GM12878 (cell line): ENCODE measurements at regions of chr7 and their contacts with region 1.

Region 1: GRCh38 chr7:135170274-135170997 is at the start of gene CYREN:
- DNase-seq: no peak
- ATAC-seq: peak; percentile 78
- H3K4me3 ChIP-seq: peak within 1 kb of the TSS; percentile 84
- H3K27ac ChIP-seq: peak within 1 kb of the TSS; percentile 96
- H3K4me1 ChIP-seq: peaks cover 24% of the 10 kb centered on the region
- H3K27me3 ChIP-seq: no peaks in the 10 kb centered on the region
- CTCF ChIP-seq: peak; percentile 69 to 88 (median 70)
- EP300 ChIP-seq: no peak; a peak in 1 of 4 replicates
- POLR2A ChIP-seq: peak; percentile 88; the same call in 1 of the 2 replicates
- RAD21 ChIP-seq: peak; percentile 74
- polyA plus RNA-seq, gene CYREN: 8.7 to 12.9 TPM

Region 2: DNA sequence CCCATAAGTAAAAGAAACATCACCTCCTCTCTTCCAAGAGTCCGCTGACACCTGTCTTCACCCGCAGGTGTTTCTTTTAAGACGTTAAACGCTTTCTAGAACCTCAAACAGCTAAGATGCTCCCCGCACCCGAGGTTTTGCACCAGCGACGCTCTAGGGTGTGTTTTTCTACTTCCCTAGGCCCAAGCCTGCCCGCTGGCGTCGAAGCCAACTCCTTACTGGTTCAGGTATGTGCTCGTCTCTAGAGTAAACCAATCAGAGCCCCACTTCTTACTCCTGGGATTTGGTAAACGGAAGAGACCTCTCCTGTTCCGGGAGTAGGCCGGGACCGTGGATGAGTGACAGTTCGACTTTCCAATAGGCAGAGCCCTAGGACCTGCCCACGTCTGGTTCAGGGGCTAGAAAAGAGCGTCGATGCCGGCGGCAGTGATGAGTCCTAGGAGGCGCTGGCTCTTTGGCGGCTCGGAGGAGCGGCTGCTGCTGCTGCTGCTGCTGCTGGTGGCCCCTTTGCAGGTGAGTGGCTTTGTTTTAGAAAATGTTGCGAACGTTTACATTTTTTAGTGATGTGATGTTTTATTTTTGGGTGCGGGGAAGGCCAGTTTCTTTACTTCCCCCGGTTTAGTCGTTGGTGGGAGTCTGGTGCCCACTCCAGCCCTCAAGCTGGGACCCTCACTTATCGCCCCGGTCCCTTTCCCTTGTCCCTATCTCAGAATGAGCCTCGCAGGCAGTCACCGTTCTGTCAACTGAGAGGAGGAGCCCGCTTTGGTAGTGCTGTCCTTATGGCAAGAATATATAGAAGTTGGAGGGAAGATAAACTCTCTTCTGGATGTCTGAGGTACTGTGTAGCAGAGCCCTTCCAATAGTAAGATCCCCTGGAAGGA is 523.8 kb before region 1 on chr7 and contains the start of gene BPGM:
- CTCF ChIA-PET with region 1: interaction called, 5 read pairs
- POLR2A ChIA-PET with region 1: interaction called, 9 read pairs
- RAD21 ChIA-PET with region 1: interaction called, 3 read pairs
- SMC1A ChIA-PET with region 1: interaction called, 4 read pairs
- in situ Hi-C with region 1: loop called (anchors 10 kb)
- intact Hi-C with region 1: loop called (anchors 5 kb)
- DNase-seq: peak; percentile 100
- ATAC-seq: peak; percentile 98
- H3K4me3 ChIP-seq: peak within 1 kb of the TSS; percentile 85
- H3K27ac ChIP-seq: peak within 1 kb of the TSS; percentile 75
- H3K4me1 ChIP-seq: 0 out of 2 replicates have a peak, but pooled peaks cover 3% of the 10 kb centered on the region
- H3K27me3 ChIP-seq: no peaks in the 10 kb centered on the region
- CTCF ChIP-seq: peak; percentile 37 to 48 (median 47)
- EP300 ChIP-seq: peak in 1 of 2 experiments; percentile 50; a peak in 1 of 4 replicates
- POLR2A ChIP-seq: peak; percentile 99
- RAD21 ChIP-seq: no peak
- polyA plus RNA-seq, gene BPGM: 18.4 to 20.1 TPM

Region 3: GRCh38 chr7:134986363-134987251 is 183.8 kb before region 1 on chr7 and contains the start of gene AGBL3:
- CTCF ChIA-PET with region 1: interaction called, 157 read pairs
- POLR2A ChIA-PET with region 1: interaction called, 41 read pairs
- RAD21 ChIA-PET with region 1: interaction called, 120 read pairs
- SMC1A ChIA-PET with region 1: interaction called, 97 read pairs
- in situ Hi-C with region 1: loop called (anchors 5 kb)
- intact Hi-C with region 1: loop called (anchors 2 kb)
- DNase-seq: peak; percentile 84
- ATAC-seq: peak; percentile 85
- H3K4me3 ChIP-seq: peak within 1 kb of the TSS; percentile 85
- H3K27ac ChIP-seq: peak within 1 kb of the TSS; percentile 97
- H3K4me1 ChIP-seq: peaks cover 11% of the 10 kb centered on the region
- H3K27me3 ChIP-seq: no peaks in the 10 kb centered on the region
- CTCF ChIP-seq: peak; percentile 59 to 75 (median 73)
- EP300 ChIP-seq: peak in 1 of 2 experiments; percentile 41; a peak in 1 of 4 replicates
- POLR2A ChIP-seq: peak; percentile 88
- RAD21 ChIP-seq: no peak
- polyA plus RNA-seq, gene AGBL3: 0.82 to 1.4 TPM

Region 4: GRCh38 chr7:135147899-135148721 is 22.3 kb before region 1 on chr7 and contains the start of gene TMEM140:
- CTCF ChIA-PET with region 1: interaction called, 86 read pairs
- POLR2A ChIA-PET with region 1: interaction called, 169 read pairs
- RAD21 ChIA-PET with region 1: interaction called, 84 read pairs
- SMC1A ChIA-PET with region 1: interaction called, 158 read pairs
- in situ Hi-C with region 1: no loop called
- intact Hi-C with region 1: loop called (anchors 1 kb)
- DNase-seq: peak; percentile 90
- ATAC-seq: peak; percentile 78
- H3K4me3 ChIP-seq: peak within 1 kb of the TSS; percentile 67
- H3K27ac ChIP-seq: peak within 1 kb of the TSS; percentile 73
- H3K4me1 ChIP-seq: peaks cover 27% of the 10 kb centered on the region
- H3K27me3 ChIP-seq: no peaks in the 10 kb centered on the region
- CTCF ChIP-seq: no peak
- EP300 ChIP-seq: peak; percentile 86 to 89; a peak in 3 of 4 replicates
- POLR2A ChIP-seq: peak; percentile 82
- RAD21 ChIP-seq: 0 out of 2 replicates have a peak, but pooled peaks have one; percentile 2
- polyA plus RNA-seq, gene TMEM140: 0.85 to 1.1 TPM

Region 5: GRCh38 chr7:135186841-135187253 is 16.4 kb after region 1 on chr7:
- CTCF ChIA-PET with region 1: interaction called, 135 read pairs
- POLR2A ChIA-PET with region 1: interaction called, 155 read pairs
- RAD21 ChIA-PET with region 1: interaction called, 146 read pairs
- SMC1A ChIA-PET with region 1: interaction called, 135 read pairs
- in situ Hi-C with region 1: no loop called
- intact Hi-C with region 1: loop called (anchors 1 kb)
- DNase-seq: no peak
- ATAC-seq: peak; percentile 77
- H3K4me3 ChIP-seq: peak overlapping the region; percentile 25; the same call in 1 of the 2 replicates
- H3K27ac ChIP-seq: peak overlapping the region; percentile 58
- H3K4me1 ChIP-seq: peaks cover 33% of the 10 kb centered on the region
- H3K27me3 ChIP-seq: no peaks in the 10 kb centered on the region
- CTCF ChIP-seq: peak in 1 of 3 experiments; percentile 24; a peak in 1 of 6 replicates
- EP300 ChIP-seq: peak; percentile 94 to 95; a peak in 3 of 4 replicates
- POLR2A ChIP-seq: peak; percentile 65
- RAD21 ChIP-seq: peak; percentile 27; the same call in 1 of the 2 replicates